Tibial artery (tissue), 4 donors: ENCODE measurements at regions of chr4 and their contacts with region 1.

Region 1: DNA sequence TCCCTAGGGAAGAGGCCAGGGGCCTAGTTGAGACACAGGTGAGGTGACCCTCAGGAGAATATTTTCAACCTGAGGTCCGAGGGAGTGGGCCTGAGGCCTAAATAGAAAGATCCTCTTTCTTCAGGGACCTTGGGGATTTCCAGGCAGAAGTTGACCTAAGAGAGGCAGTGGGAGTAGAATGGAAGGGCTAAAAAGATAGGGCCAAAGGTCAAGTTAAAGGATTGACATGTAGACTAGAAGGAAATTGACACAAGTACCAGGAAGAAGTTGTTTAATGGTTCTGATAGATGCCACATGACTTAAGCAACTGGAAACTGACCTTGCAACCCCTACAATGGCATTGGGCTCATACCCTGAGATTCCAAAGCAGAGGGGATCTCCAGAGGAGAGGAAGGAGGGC is 76.9 kb downstream of the SHROOM3 start:
- DNase-seq: no peak
- H3K4me3 ChIP-seq: no peak overlapping the region
- H3K27ac ChIP-seq: no peak overlapping the region
- H3K4me1 ChIP-seq: peaks cover 0 to 19% (median 9%) of the 10 kb centered on the region in 4 donors
- H3K27me3 ChIP-seq: no peaks in the 10 kb centered on the region
- CTCF ChIP-seq: no peak

Region 2: DNA sequence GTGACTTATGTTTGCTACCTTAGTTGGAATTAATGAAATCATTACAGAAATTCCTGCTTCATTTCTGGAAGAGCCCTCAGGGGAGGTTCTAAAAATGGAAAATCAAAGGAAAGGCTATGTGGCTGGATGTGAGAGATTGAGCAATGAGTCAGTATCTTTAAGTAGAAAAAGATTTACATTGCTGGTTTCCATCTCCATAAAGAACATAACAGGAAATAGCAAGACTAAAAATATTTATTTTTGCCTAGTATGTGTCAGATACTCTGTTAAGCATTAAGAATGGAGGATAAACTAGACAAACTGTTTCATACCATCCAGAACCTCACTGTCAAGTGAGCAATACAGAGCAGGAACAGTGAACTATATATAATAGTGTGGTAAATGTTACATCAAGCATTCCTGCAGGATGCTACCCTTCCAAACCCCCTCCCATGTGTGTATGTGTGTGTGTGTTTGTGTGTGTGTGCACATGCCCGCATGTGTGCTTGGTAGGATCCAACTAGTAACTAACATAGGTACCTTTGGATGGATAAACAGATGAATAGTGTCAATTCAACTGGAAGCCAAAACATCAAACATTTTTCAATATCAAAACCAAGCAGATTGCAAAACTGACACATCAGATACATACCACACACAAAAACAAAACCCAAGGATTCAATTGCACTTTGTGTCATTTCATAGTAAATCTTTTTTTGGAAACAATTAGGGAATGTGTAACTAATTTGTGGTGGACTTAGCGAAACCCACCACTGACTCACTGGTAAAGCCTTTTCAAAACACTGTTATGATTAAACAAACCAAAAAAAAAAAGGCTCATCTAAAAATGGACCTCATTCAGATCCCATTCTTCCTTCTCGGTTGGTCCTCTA is 146.5 kb after region 1 on chr4:
- intact Hi-C with region 1: no loop called
- DNase-seq: no peak
- H3K4me3 ChIP-seq: no peak overlapping the region
- H3K27ac ChIP-seq: peak overlapping the region; percentile 56 to 72
- H3K4me1 ChIP-seq: peaks cover 0 to 58% (median 41%) of the 10 kb centered on the region in 4 donors
- H3K27me3 ChIP-seq: no peaks in the 10 kb centered on the region
- CTCF ChIP-seq: no peak

Region 3: GRCh38 chr4:76748649-76749048 is 236.7 kb after region 1 on chr4:
- intact Hi-C with region 1: loop called (anchors 2 kb)
- DNase-seq: peak in 1 of 2 donors; percentile 35
- H3K4me3 ChIP-seq: no peak overlapping the region
- H3K27ac ChIP-seq: peak overlapping the region; percentile 16 to 18
- H3K4me1 ChIP-seq: peaks cover 0 to 75% (median 23%) of the 10 kb centered on the region in 4 donors
- H3K27me3 ChIP-seq: no peaks in the 10 kb centered on the region
- CTCF ChIP-seq: peak; percentile 10 to 25

Region 4: DNA sequence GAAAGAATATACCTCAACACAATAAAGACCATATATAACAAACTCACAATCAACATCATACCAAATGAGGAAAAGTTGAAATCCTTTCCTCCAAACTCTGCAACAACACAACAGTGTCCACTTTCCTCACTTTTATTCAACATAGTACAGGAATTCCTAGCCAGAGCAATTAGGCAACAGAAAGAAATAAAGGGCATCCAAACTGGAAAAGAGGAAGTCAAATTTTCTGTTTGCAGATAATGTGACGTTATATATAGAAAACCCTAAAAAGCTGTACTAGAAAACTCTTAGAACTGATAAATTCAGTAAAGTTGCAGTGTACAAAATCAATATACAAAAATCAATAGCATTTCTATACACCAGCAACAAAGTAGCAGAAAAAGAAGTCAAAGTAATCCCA is 278.4 kb after region 1 on chr4:
- intact Hi-C with region 1: no loop called
- DNase-seq: no peak
- H3K4me3 ChIP-seq: no peak overlapping the region
- H3K27ac ChIP-seq: no peak overlapping the region
- H3K4me1 ChIP-seq: no peaks in the 10 kb centered on the region
- H3K27me3 ChIP-seq: no peaks in the 10 kb centered on the region
- CTCF ChIP-seq: no peak

Region 5: DNA sequence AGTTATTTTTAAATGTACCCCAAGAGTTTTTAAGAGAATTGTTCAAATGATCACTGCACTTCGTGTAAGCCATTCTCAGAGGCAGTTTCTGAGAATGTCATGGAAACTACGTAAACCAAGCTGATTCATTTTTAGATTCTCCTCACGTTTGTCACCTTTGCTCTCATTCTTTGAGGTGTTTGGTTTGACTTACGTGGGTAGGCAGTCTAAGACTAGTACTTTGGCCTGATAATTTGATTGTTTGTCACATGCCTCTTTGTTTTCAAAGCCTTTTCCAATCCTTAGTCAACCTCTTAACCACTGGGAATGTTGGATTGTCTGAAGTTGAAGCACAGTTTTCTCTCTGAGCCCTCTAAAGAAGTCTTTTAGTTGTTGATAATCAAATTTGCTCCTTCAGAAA is 448.1 kb after region 1 on chr4:
- intact Hi-C with region 1: no loop called
- DNase-seq: no peak
- H3K4me3 ChIP-seq: no peak overlapping the region
- H3K27ac ChIP-seq: no peak overlapping the region
- H3K4me1 ChIP-seq: peaks cover 0 to 29% (median 14%) of the 10 kb centered on the region in 4 donors
- H3K27me3 ChIP-seq: no peaks in the 10 kb centered on the region
- CTCF ChIP-seq: no peak